Transverse colon (tissue), 4 donors: ENCODE measurements at regions of chr5 and their contacts with region 1.

Region 1: GRCh38 chr5:53236683-53237082 is 127.1 kb upstream of the MOCS2 start:
- DNase-seq: no peak
- H3K4me3 ChIP-seq: no peak overlapping the region
- H3K27ac ChIP-seq: no peak overlapping the region
- H3K4me1 ChIP-seq: no peaks in the 10 kb centered on the region
- H3K27me3 ChIP-seq: no peaks in the 10 kb centered on the region
- CTCF ChIP-seq: no peak
- EP300 ChIP-seq: no peak
- POLR2A ChIP-seq: no peak

Region 2: DNA sequence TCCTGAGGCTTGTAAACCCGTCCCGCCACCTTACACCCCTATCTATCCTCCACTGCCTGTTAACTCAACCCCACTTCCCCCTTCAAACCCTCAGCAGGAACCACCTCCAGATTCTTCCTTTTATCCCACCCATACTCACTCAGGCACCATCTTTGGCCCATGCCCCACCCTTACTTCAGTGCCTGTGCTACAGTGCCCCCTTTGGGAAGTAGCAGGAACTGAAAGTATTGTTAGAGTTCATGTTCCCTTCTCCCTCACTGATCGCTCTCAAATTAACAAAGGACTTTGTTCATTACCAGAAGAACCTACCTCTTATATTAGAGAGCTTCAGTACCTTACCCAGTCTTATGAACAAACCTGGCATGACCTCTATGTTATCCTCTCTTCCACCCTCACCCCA is 34.9 kb before region 1 on chr5:
- in situ Hi-C with region 1: no loop called
- intact Hi-C with region 1: loop called (anchors 1 kb)
- DNase-seq: no peak
- H3K4me3 ChIP-seq: no peak overlapping the region
- H3K27ac ChIP-seq: no peak overlapping the region
- H3K4me1 ChIP-seq: no peaks in the 10 kb centered on the region
- H3K27me3 ChIP-seq: no peaks in the 10 kb centered on the region
- CTCF ChIP-seq: peak in 1 of 5 experiments; percentile 16
- EP300 ChIP-seq: no peak
- POLR2A ChIP-seq: no peak

Region 3: DNA sequence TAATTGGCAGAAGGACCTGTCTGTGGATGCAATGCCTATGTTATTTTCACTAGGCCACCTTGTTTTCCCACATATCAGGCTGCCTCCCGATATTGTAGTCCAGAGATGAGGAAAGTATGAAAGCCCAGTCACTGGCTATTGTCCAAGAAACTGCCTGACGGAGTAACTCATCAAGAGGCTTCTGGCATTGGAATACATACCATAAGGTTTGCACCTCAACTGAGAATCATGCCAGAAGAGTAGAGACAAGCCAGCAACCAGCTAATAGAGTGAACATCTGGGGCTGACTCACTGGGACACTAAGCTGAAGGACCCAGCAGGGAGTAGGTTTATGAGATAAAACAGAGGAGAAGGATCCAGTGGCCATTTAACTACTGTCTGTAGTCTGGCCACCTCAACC is 106.5 kb after region 1 on chr5:
- in situ Hi-C with region 1: no loop called
- intact Hi-C with region 1: no loop called
- DNase-seq: no peak
- H3K4me3 ChIP-seq: no peak overlapping the region
- H3K27ac ChIP-seq: no peak overlapping the region
- H3K4me1 ChIP-seq: no peaks in the 10 kb centered on the region
- H3K27me3 ChIP-seq: no peaks in the 10 kb centered on the region
- CTCF ChIP-seq: no peak
- EP300 ChIP-seq: no peak
- POLR2A ChIP-seq: no peak